Activated naive CD8-positive, alpha-beta T cell treated with anti-CD3 and anti-CD28 coated beads, Interleukin-2, amount 10 ng/mL, durations not matched to agents 7 days and 5 days (primary cell): ENCODE measurements at regions of chr15 and their contacts with region 1.

Region 1: GRCh38 chr15:38563723-38564519 is 693 bp downstream of the RASGRP1 start:
- DNase-seq: peak; percentile 95
- ATAC-seq: peak; percentile 69
- H3K4me3 Mint-ChIP-seq: peak overlapping the region; percentile 99
- H3K27ac Mint-ChIP-seq: peak overlapping the region; percentile 93
- H3K4me1 Mint-ChIP-seq: peaks cover 55% of the 10 kb centered on the region
- H3K27me3 Mint-ChIP-seq: no peaks in the 10 kb centered on the region

Region 2: DNA sequence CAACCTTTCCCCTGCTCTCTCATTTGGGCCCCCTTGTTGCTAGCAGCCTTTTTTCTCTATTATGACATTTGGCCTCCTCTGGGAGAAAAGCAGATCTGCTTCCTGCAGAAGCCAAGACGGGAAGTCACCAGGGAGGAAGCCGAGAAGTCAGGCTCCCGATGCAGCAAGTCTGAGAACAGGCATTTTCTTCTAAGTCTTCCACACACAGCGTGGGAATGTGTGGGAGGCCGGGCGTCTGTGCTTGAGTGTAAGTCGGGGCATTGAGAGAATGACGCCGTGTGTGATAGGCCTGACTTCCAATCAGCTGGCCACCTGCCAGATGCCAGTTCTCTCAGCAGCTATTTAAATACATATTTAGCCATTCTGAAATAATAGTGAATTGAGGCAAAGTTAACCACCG is 185.8 kb before region 1 on chr15:
- POLR2A ChIA-PET with region 1: no interaction called
- DNase-seq: no peak
- ATAC-seq: no peak
- H3K4me3 Mint-ChIP-seq: no peak overlapping the region
- H3K27ac Mint-ChIP-seq: no peak overlapping the region
- H3K4me1 Mint-ChIP-seq: no peaks in the 10 kb centered on the region
- H3K27me3 Mint-ChIP-seq: peaks cover 34% of the 10 kb centered on the region

Region 3: DNA sequence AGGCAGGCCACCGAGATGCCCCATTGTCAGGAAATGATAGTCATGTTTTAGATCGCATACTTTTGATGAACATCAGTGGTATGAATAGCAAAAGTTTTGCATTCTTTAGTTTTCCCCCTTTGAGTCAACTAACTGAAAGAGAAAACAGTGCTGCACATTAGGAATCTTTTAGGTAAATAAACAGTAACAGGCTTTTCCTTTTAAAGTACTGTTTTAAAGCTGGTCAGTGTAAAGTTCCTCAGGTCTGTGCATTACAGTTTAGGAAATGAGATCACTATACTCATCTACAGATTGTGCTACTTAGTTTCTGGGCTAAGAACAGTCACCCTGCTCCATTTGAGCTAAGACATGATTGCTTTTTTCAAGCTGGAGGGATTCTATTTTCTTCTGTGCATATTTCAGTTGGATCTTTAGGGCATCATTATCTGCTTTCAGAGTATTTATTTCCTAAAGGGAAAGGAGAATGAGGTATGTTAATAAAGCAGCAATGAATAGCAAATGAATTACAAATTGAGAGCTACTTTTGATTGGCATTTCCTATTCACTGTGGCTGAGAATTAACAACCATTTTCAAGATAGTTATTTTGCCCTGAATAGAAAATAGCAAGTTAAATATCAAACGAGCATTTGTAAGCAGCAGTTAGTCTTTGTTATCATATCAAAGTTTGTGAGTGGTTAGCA is 73.5 kb before region 1 on chr15:
- POLR2A ChIA-PET with region 1: no interaction called
- DNase-seq: no peak
- ATAC-seq: no peak
- H3K4me3 Mint-ChIP-seq: no peak overlapping the region
- H3K27ac Mint-ChIP-seq: peak overlapping the region; percentile 27
- H3K4me1 Mint-ChIP-seq: peaks cover 24% of the 10 kb centered on the region
- H3K27me3 Mint-ChIP-seq: no peaks in the 10 kb centered on the region

Region 4: GRCh38 chr15:38531509-38531908 is 32.4 kb before region 1 on chr15:
- POLR2A ChIA-PET with region 1: no interaction called
- DNase-seq: no peak
- ATAC-seq: no peak
- H3K4me3 Mint-ChIP-seq: no peak overlapping the region
- H3K27ac Mint-ChIP-seq: no peak overlapping the region
- H3K4me1 Mint-ChIP-seq: peaks cover 75% of the 10 kb centered on the region
- H3K27me3 Mint-ChIP-seq: no peaks in the 10 kb centered on the region

Region 5: GRCh38 chr15:38610748-38611147 is 46.8 kb after region 1 on chr15:
- POLR2A ChIA-PET with region 1: interaction called, 55 read pairs
- DNase-seq: no peak
- ATAC-seq: peak; percentile 71
- H3K4me3 Mint-ChIP-seq: peak overlapping the region; percentile 80
- H3K27ac Mint-ChIP-seq: peak overlapping the region; percentile 97
- H3K4me1 Mint-ChIP-seq: peaks cover 64% of the 10 kb centered on the region
- H3K27me3 Mint-ChIP-seq: no peaks in the 10 kb centered on the region

Region 6: GRCh38 chr15:38647683-38648082 is 83.8 kb after region 1 on chr15:
- POLR2A ChIA-PET with region 1: interaction called, 256 read pairs
- DNase-seq: no peak
- ATAC-seq: no peak
- H3K4me3 Mint-ChIP-seq: no peak overlapping the region
- H3K27ac Mint-ChIP-seq: no peak overlapping the region
- H3K4me1 Mint-ChIP-seq: peaks cover 67% of the 10 kb centered on the region
- H3K27me3 Mint-ChIP-seq: no peaks in the 10 kb centered on the region

Region 7: DNA sequence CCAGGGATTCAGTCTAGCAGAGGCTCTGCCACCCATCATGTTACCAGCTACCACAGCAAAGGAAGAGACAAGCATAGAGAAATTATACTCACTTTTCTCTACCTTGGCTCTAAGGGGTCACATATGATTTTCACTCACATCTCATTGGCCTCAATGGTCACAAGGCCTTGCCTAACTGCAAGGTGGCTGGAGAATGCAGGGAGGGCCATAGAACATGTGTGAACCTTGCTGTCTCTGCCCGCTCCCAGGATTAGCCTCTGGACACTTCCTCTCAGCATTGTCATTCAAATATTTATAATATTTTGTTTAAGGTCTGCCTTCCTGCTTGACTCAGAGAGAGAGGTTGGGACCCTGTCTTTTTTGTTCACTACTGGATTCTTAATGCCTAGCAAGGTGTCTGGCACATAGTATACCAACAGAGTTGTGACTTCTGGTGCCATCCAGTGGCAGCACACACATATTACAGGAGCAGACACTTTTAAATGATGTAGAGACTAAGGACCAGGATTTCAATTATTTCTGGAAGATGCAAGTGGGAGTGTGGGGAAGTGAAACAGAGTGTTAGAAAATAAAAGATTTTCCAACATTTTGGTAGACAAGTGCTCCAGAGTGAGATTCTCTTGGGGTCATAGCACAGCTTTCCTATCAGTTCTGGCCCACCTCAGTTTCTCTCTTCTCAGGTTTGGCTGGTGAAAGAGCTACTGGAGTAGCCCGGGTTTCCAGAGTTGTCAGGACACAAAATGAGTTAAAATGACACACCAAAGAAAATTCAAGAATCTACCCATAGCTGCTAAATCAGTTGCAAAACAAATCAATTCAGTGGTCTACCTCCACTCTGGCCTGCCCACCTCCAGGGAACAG is 119.7 kb after region 1 on chr15:
- POLR2A ChIA-PET with region 1: interaction called, 275 read pairs
- DNase-seq: peak; percentile 66
- ATAC-seq: peak; percentile 44
- H3K4me3 Mint-ChIP-seq: peak overlapping the region; percentile 74
- H3K27ac Mint-ChIP-seq: peak overlapping the region; percentile 95
- H3K4me1 Mint-ChIP-seq: peaks cover 62% of the 10 kb centered on the region
- H3K27me3 Mint-ChIP-seq: no peaks in the 10 kb centered on the region